PC-9 (cell line): ENCODE measurements at regions of chr6 and their contacts with region 1.

Region 1: DNA sequence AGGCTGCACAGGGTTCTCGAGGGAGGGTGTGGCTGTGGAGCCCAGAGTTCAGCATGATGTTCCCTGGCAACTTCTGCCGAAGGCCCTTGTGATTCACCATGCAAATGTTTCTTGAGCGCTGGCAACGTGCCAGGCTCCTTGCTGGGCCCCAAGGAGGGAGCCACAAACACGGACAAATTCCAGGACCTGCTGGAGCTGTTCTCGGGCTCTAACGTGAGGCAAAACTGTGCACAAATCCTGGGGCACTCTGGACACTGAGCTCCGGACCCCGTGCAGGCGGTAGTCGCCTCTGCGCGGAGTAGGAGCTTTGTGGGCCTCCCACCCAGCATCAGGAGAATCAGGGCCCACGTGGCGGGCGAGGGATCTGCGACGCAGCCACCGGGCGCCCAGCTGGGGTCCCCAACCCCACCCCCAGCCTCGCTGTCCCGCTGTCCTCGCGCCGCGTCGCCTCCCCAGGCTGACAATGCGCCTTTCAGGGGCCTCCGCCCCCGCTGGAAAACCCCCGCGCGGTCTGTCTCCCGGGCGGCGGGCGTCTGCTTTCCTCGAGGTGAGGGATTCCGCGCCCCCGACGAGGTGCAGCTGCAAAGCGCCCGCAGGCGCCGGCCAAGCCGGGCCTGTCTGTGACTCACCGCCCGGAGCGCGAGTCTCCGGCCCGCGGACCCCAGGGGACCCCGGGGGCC is 31.7 kb upstream of the SCUBE3 start:
- DNase-seq: peak; percentile 58 to 65
- H3K4me3 ChIP-seq: peak overlapping the region; percentile 42; the same call in 1 of the 2 replicates
- H3K27ac ChIP-seq: peak overlapping the region; percentile 82
- H3K4me1 ChIP-seq: peaks cover 68% of the 10 kb centered on the region
- H3K27me3 ChIP-seq: no peaks in the 10 kb centered on the region
- CTCF ChIP-seq: no peak

Region 2: DNA sequence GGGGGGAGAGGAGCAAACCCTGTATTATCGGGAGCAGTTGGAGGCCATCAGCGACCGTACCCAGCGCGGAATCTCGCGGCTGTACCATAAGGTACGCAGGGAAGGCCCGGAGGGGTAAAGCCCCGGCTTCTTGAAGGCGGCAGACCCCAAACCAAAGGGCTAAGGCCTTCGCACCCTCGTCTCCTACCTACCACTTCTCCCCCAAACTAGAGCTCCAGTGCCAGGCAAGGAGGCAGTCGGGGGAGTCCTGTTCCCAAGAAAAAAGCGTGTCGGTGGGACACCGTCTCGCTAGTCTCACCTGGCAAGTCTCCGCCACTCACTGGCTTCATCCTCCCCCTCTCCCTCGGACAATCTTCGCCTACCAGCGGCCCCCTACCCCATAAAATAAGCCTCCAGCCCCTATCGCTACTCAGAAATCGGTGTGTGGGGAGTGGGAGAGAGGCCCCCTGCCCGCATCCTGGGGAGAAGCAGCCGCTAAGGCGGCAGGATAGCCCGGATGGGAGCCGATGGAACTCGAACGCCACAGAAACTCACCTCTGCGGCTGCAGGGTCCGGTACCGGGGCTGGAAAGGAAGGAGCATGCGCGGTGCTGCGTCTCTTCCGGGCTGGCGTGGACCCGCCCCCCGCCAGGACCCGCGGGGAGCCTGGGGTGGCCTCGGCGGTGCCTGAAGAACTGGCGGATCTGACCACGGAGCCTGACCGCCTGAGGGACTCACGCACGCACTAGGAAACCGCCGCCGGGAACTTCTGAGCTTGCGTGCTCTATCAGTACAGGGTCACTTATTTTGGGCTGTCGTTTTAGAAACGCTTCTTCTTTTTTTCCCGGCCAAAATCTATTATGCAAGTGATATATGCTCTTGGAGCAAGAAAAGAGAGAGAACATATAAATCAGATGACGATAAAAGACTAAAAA is 756.3 kb before region 1 on chr6 and contains the start of gene RPS10:
- CTCF ChIA-PET with region 1: no interaction called
- POLR2A ChIA-PET with region 1: interaction called, 10 read pairs
- intact Hi-C with region 1: no loop called
- DNase-seq: peak; percentile 68 to 94
- H3K4me3 ChIP-seq: peak within 1 kb of the TSS; percentile 94
- H3K27ac ChIP-seq: peak within 1 kb of the TSS; percentile 88
- H3K4me1 ChIP-seq: peaks cover 26% of the 10 kb centered on the region; the same call in 1 of the 2 replicates
- H3K27me3 ChIP-seq: no peaks in the 10 kb centered on the region
- CTCF ChIP-seq: no peak
- total RNA-seq, gene RPS10: 1,786 and 2,008 TPM in 2 replicates

Region 3: GRCh38 chr6:34709386-34709785 is 472.7 kb before region 1 on chr6:
- CTCF ChIA-PET with region 1: no interaction called
- POLR2A ChIA-PET with region 1: interaction called, 10 read pairs
- intact Hi-C with region 1: no loop called
- DNase-seq: no peak
- H3K4me3 ChIP-seq: no peak overlapping the region
- H3K27ac ChIP-seq: no peak overlapping the region
- H3K4me1 ChIP-seq: peaks cover 5% of the 10 kb centered on the region; the same call in 1 of the 2 replicates
- H3K27me3 ChIP-seq: no peaks in the 10 kb centered on the region
- CTCF ChIP-seq: no peak